PC-9 (cell line): ENCODE measurements at regions of chr4 and their contacts with region 1.

Region 1: DNA sequence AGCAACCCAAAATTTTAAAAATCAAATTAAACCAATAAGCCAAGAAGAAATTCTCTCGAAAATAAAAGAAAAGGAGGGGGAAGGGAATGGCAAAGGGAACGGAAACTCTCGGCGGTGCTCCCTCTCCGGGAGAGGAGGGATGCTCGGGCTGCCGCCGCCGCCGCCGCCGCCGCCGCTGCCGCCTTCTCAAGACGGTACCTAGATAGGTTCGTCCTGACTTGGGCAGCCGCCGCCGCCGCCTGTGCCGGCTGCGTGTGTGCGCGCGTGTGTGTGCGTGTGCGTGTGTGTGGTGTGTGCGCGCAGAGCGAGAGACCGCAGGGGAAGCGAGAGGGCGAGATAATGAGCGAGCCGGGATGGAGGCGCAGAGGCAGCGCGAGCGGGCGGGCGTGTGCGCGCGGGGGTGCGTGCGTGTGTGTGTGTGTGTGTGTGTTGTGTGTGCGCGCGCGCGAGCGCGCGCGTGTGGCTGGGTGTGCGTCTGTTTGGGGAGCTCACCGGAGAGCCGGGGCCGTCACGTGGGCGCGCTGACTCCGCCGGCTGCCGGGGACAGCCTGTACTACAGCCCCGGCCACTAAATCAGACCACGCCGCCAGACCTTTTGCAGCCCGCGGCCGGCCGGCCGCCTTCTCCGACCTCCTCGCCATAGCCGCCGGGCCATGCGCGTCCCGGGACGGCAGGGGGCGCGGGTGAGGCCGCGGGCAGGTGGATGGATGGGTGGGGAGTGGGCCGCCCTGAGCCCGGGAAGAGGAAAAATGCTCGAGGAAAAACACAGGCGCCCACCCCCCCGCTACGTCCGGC is 111.6 kb downstream of the DHX15 start:
- DNase-seq: peak; percentile 65 to 72
- H3K4me3 ChIP-seq: peak overlapping the region; percentile 65
- H3K27ac ChIP-seq: no peak overlapping the region
- H3K4me1 ChIP-seq: peaks cover 6% of the 10 kb centered on the region; the same call in 1 of the 2 replicates
- H3K27me3 ChIP-seq: peaks cover 23% of the 10 kb centered on the region
- CTCF ChIP-seq: peak; percentile 75

Region 2: DNA sequence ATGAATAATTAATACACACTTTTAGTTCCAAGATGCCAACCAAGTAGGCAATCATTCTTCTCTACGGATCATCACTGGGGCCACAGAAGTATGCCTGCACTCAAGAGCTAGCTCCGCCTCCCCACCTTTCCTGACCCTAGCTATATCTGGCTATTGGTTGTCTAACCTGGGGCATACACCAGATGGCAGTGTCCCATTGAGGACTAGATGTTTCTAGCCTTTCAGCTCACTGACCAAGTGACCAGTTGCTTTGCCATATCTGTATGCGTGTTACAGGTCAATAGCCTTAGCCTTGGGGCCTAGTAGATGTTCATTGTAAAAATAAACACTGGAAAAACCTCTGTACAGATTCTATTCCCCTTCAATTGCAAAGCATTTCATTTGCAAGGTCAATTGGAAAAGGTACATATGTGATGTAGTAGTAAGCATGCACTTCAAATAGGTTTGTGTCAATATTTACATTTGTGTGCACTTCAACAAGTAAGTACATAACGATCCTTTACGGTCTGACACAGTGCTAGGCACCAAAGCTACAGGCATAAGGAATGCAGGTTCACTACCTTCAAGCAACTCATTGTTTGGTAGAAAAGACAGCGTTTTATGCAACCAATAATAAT is 1104.5 kb before region 1 on chr4:
- CTCF ChIA-PET with region 1: no interaction called
- POLR2A ChIA-PET with region 1: no interaction called
- intact Hi-C with region 1: no loop called
- DNase-seq: no peak
- H3K4me3 ChIP-seq: no peak overlapping the region
- H3K27ac ChIP-seq: no peak overlapping the region
- H3K4me1 ChIP-seq: no peaks in the 10 kb centered on the region; the same call in 1 of the 2 replicates
- H3K27me3 ChIP-seq: no peaks in the 10 kb centered on the region
- CTCF ChIP-seq: no peak

Region 3: DNA sequence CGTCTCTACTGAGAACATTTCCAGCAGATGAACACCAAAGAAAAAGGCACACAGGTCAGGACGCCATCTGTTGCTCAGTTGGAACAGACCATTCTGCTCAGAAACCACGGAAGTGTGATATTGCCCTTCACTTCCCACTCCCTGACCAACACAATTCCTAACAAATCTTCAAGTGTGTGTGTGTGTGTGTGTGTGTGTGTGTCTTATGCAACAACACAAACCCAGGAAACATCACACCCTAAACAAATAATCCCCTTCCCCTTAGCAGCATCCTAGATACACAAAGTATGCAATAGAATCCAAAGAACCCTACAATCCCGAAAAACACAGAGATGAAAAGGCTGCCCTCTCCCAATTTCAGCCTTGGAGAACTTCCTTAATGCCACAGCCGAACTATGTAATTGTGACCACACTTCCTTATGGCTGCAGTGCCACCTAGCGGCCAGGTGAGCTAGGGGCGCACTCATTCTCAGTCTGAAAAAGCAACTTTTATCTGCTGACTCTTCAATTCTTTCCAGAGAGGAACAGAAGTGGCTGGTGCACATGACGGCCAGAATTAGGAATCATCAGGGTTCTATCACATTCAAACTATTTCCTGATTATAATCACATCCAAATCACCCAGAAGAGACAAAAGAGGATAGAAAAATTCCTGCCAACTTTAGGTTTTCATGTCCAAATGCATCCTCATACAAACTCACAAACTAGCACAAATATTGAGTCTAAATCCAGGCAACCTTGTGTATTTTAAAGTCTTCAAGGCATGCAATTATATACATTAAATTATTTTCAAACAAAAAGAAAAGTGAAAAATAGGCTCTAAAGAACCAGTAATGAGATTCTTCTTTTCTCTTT is 53.3 kb before region 1 on chr4:
- CTCF ChIA-PET with region 1: no interaction called
- POLR2A ChIA-PET with region 1: no interaction called
- intact Hi-C with region 1: no loop called
- DNase-seq: peak; percentile 60 to 61
- H3K4me3 ChIP-seq: no peak overlapping the region
- H3K27ac ChIP-seq: no peak overlapping the region
- H3K4me1 ChIP-seq: no peaks in the 10 kb centered on the region
- H3K27me3 ChIP-seq: peaks cover 13% of the 10 kb centered on the region; the same call in 1 of the 2 replicates
- CTCF ChIP-seq: peak; percentile 89

Region 4: GRCh38 chr4:24794916-24795665 is 322.4 kb after region 1 on chr4 and contains the start of gene SOD3:
- CTCF ChIA-PET with region 1: no interaction called
- POLR2A ChIA-PET with region 1: interaction called, 3 read pairs
- intact Hi-C with region 1: loop called (anchors 10 kb)
- DNase-seq: peak; percentile 78 to 86
- H3K4me3 ChIP-seq: peak within 1 kb of the TSS; percentile 34; the same call in 1 of the 2 replicates
- H3K27ac ChIP-seq: peak within 1 kb of the TSS; percentile 25; the same call in 1 of the 2 replicates
- H3K4me1 ChIP-seq: peaks cover 12% of the 10 kb centered on the region
- H3K27me3 ChIP-seq: no peaks in the 10 kb centered on the region
- CTCF ChIP-seq: no peak
- total RNA-seq, gene SOD3: 6.3 and 7.6 TPM in 2 replicates

Region 5: DNA sequence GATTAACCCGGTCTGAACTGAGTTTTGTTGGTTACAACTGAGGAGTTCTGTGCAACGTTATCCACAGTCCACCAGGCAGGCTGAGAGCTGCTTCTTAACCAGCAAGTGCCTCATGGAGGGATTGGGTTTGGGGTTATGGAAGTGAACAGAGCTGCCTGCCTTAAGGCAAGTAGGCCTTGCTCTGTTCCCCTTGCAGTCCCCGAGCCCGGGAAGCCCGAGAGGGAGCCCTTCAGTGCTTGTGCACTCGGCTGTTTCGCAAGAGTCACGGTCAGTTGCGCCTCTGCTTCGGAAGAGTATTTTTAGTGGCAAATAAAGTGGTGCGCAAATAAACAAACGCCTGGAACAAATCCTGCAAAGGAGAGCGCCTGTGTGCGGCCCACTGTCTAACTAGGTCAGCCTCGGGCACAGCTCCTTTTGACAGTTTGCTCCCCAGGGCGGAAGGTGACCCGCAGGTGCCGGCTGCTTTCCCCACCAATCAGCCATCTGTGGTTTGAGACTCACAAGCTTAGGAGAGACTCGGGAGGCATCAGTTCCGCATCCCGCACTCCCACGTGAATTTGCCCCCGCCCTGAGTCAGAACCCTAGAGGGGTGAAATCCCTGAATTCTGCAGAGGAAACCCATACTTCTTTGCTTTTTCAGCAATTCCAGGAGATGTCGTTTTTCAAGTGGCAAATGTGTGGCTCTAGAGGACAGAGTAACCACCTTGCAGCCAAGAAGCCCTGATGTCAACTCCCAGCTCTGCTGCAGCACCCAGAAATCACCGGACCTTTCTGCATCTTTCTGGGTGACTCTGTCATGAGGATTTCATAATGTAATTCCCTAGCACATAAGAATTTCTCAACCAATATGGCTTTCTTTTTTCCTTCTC is 501.3 kb after region 1 on chr4:
- CTCF ChIA-PET with region 1: no interaction called
- POLR2A ChIA-PET with region 1: interaction called, 6 read pairs
- intact Hi-C with region 1: loop called (anchors 5 kb)
- DNase-seq: peak in 1 of 2 experiments; percentile 8
- H3K4me3 ChIP-seq: no peak overlapping the region
- H3K27ac ChIP-seq: no peak overlapping the region
- H3K4me1 ChIP-seq: peaks cover 37% of the 10 kb centered on the region
- H3K27me3 ChIP-seq: no peaks in the 10 kb centered on the region
- CTCF ChIP-seq: no peak

Region 6: DNA sequence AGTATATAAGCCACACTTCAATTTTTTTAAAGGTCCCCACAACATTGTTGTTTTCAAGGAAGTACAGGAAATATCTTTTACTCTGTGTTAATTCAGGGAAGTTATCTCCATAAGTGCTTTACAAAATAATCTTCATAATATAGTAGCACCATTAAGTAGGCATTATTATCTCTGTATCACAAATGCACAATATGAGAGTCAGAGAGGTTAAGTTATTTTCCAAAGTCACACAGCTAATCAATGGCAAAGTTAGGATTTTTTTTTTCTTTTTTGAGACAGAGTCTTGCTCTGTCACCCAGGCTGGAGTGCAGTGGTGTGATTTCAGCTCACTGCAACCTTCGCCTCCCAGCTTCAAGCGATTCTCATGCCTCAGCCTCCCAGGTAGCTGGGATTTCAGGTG is 726.0 kb after region 1 on chr4:
- CTCF ChIA-PET with region 1: interaction called, 14 read pairs
- POLR2A ChIA-PET with region 1: no interaction called
- intact Hi-C with region 1: no loop called
- DNase-seq: no peak
- H3K4me3 ChIP-seq: no peak overlapping the region
- H3K27ac ChIP-seq: no peak overlapping the region
- H3K4me1 ChIP-seq: no peaks in the 10 kb centered on the region
- H3K27me3 ChIP-seq: no peaks in the 10 kb centered on the region
- CTCF ChIP-seq: no peak

Region 7: DNA sequence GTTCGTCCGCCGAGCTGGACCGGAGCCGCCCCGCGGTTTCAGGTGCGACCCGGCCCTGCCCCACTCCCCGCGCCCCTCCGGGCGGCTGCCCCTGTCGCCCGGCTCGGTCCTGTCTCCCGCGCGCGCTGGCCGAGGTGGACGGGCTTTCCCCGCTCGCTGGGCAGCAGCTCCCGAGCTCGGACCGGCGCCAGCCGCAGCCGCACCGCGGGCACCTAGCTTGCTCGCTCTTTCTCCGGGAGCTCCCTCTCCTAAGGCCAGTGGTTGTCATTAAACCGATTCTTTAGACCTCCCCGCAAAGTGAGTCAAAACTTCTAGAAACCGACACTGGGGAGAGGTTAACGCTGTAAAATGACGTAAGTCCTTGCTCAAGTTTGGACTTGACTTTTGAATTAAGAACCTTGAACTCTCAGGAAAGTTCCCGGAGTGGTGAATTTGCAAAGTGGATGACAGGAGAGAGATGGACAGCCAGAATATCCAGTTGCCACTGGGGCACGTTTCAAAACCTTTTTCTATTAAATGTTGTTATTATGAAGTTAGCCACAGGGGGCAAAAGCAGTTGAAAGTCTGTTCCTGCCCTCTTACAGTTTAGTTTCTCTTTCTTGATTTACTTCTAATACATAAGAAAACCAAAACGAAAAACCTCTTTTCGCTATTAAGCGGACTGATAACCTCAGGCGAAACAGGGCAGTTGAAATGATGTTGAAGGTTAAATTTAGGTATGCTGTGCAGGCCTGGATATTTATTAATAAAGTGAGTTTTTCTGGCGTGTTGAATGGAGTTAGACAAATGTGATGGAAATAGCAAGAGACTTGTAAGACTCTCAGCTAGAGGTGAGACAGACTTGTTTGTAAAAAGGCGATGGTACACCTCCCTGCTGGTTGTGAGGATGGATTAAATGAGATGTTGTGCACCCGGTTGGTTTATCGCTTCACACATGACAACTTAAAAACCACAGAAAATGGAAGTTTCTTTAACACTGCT is 762.0 kb after region 1 on chr4:
- CTCF ChIA-PET with region 1: no interaction called
- POLR2A ChIA-PET with region 1: interaction called, 12 read pairs
- intact Hi-C with region 1: no loop called
- DNase-seq: peak; percentile 46 to 72
- H3K4me3 ChIP-seq: peak overlapping the region; percentile 78
- H3K27ac ChIP-seq: peak overlapping the region; percentile 26
- H3K4me1 ChIP-seq: peaks cover 6% of the 10 kb centered on the region
- H3K27me3 ChIP-seq: no peaks in the 10 kb centered on the region
- CTCF ChIP-seq: peak; percentile 69